RWPE1 (cell line): ENCODE measurements at regions of chr9 and their contacts with region 1.

Region 1: GRCh38 chr9:23423999-23424398 is 402.0 kb downstream of the ELAVL2 start:
- DNase-seq: no peak
- H3K27ac ChIP-seq: no peak overlapping the region
- CTCF ChIP-seq: no peak

Region 2: GRCh38 chr9:23307731-23308513 is 116.1 kb before region 1 on chr9:
- CTCF ChIA-PET with region 1: no interaction called
- POLR2A ChIA-PET with region 1: interaction called, 15 read pairs
- DNase-seq: no peak
- H3K27ac ChIP-seq: no peak overlapping the region
- CTCF ChIP-seq: no peak

Region 3: GRCh38 chr9:23464275-23464674 is 40.3 kb after region 1 on chr9:
- CTCF ChIA-PET with region 1: no interaction called
- POLR2A ChIA-PET with region 1: no interaction called
- DNase-seq: no peak
- H3K27ac ChIP-seq: no peak overlapping the region
- CTCF ChIP-seq: no peak